ENCODE measurements at regions of chr3 and their contacts with region 1.

Region 1: GRCh38 chr3:146803745-146804144 is 198.6 kb upstream of the PLSCR5 start:
- DNase-seq: peak; percentile 75
- H3K4me3 ChIP-seq: no peak overlapping the region
- H3K27ac ChIP-seq: no peak overlapping the region
- H3K4me1 ChIP-seq: no peaks in the 10 kb centered on the region
- H3K27me3 ChIP-seq: no peaks in the 10 kb centered on the region
- CTCF ChIP-seq: no peak
- POLR2A ChIP-seq: no peak

Region 2: GRCh38 chr3:146640955-146641867 is 162.5 kb before region 1 on chr3:
- CTCF ChIA-PET with region 1: no interaction called
- POLR2A ChIA-PET with region 1: no interaction called
- dilution Hi-C with region 1: no loop called
- intact Hi-C with region 1: no loop called
- DNase-seq: peak; percentile 69
- H3K4me3 ChIP-seq: no peak overlapping the region
- H3K27ac ChIP-seq: no peak overlapping the region
- H3K4me1 ChIP-seq: no peaks in the 10 kb centered on the region
- H3K27me3 ChIP-seq: no peaks in the 10 kb centered on the region
- CTCF ChIP-seq: peak; percentile 38
- POLR2A ChIP-seq: no peak

Region 3: DNA sequence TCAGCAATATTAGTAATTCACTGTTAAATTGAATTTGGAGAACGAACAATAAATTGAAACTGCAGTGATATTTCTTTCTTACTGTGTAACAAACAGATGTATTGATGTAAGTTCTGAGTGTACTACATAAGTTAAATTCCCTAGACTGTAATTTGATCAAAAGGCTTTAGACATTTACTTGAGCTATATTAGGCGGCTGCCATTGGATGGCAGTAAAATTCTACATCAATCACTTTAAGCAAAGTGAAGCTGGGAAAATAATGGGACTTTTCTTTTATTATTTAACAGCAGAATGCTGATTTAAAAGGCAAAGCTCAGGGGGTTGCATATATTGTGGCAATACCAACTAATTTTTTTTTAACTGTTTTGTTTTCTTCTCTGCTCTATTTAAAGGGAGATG is 14.0 kb after region 1 on chr3:
- CTCF ChIA-PET with region 1: interaction called, 11 read pairs
- POLR2A ChIA-PET with region 1: no interaction called
- dilution Hi-C with region 1: no loop called
- intact Hi-C with region 1: no loop called
- DNase-seq: peak; percentile 43
- H3K4me3 ChIP-seq: no peak overlapping the region
- H3K27ac ChIP-seq: no peak overlapping the region
- H3K4me1 ChIP-seq: no peaks in the 10 kb centered on the region
- H3K27me3 ChIP-seq: no peaks in the 10 kb centered on the region
- CTCF ChIP-seq: peak in 1 of 2 donors; percentile 31
- POLR2A ChIP-seq: no peak

Measured in endothelial cell of umbilical vein (primary cell).